ENCODE measurements at regions of chr6 and their contacts with region 1.

Region 1: DNA sequence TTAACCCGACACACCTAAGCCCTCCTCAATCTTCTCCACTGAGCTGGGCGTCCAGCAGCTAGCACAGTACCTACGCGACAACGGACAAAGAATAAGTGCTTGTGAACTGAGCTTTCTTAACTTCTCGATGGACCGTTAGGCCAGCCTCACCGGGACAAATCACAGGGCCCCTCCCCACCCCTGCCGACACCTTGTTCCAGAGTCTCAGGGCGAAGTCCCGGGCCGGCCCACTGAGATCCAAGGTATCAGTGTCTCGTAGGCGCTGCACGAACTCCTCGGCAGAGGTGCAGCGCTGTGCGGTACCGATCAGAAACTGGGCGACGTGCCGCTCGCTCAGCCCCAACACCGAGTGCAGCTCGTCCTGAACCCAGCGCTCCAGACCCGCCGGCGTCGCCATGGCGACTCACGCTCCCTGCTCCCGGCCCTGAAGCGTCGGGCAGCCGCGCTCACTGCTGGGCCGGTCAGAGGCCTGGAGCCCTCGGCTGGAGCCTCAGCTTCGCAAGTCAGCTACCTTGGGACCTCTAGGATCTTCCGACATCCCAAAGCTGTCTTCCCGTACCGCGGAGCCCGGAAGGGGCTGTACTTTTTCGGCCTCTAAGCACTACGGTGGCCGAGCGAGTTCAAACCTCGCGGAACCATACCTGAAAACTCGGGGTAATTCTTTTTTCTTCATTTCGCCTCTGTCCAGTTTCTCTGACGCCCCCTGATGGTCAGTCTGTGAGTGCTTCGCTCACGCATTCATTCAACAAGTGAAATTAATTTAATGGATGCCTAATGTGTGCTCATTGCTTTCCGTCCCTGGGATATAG is at the start of gene DHX16:
- DNase-seq: peak; percentile 65 to 85 (median 83)
- ATAC-seq: peak; percentile 93
- H3K4me3 ChIP-seq: peak within 1 kb of the TSS; percentile 74
- H3K4me3 Mint-ChIP-seq: peak within 1 kb of the TSS; percentile 87 to 94 (median 91)
- H3K27ac ChIP-seq: peak within 1 kb of the TSS; percentile 77
- H3K27ac Mint-ChIP-seq: peak within 1 kb of the TSS; percentile 70 to 93 (median 91)
- H3K4me1 ChIP-seq: peaks cover 8 to 15% of the 10 kb centered on the region in 2 donors
- H3K4me1 Mint-ChIP-seq: peaks cover 28 to 46% (median 43%) of the 10 kb centered on the region in 7 donors
- H3K27me3 ChIP-seq: no peaks in the 10 kb centered on the region
- H3K27me3 Mint-ChIP-seq: no peaks in the 10 kb centered on the region
- total RNA-seq, gene DHX16: 25.9 to 51.5 (median 46.7) TPM

Region 2: GRCh38 chr6:30626484-30627366 is 45.9 kb before region 1 on chr6 and contains the start of gene ATAT1:
- CTCF ChIA-PET with region 1: interaction called, 3 read pairs
- POLR2A ChIA-PET with region 1: interaction called, 4 read pairs
- intact Hi-C with region 1: loop called (anchors 1 to 2 kb)
- DNase-seq: peak; percentile 80 to 90 (median 85)
- ATAC-seq: peak; percentile 100
- H3K4me3 ChIP-seq: peak within 1 kb of the TSS; percentile 84
- H3K4me3 Mint-ChIP-seq: peak within 1 kb of the TSS; percentile 88 to 97 (median 92)
- H3K27ac ChIP-seq: peak within 1 kb of the TSS; percentile 92
- H3K27ac Mint-ChIP-seq: peak within 1 kb of the TSS; percentile 89 to 97 (median 96)
- H3K4me1 ChIP-seq: peaks cover 10 to 13% of the 10 kb centered on the region in 2 donors
- H3K4me1 Mint-ChIP-seq: peaks cover 15 to 35% (median 24%) of the 10 kb centered on the region in 7 donors
- H3K27me3 ChIP-seq: no peaks in the 10 kb centered on the region
- H3K27me3 Mint-ChIP-seq: no peaks in the 10 kb centered on the region
- total RNA-seq, gene ATAT1: 7.0 to 12.0 (median 9.5) TPM

Region 3: GRCh38 chr6:30646458-30647241 is 26.0 kb before region 1 on chr6 and contains the start of gene C6orf136:
- CTCF ChIA-PET with region 1: interaction called, 4 read pairs
- POLR2A ChIA-PET with region 1: interaction called, 12 read pairs
- intact Hi-C with region 1: loop called (anchors 1 kb)
- DNase-seq: peak in 8 of 9 donors; percentile 77 to 94 (median 92)
- ATAC-seq: peak; percentile 90
- H3K4me3 ChIP-seq: peak within 1 kb of the TSS; percentile 93
- H3K4me3 Mint-ChIP-seq: peak within 1 kb of the TSS; percentile 82 to 93 (median 88)
- H3K27ac ChIP-seq: peak within 1 kb of the TSS; percentile 91
- H3K27ac Mint-ChIP-seq: peak within 1 kb of the TSS; percentile 79 to 93 (median 91)
- H3K4me1 ChIP-seq: peaks cover 11 to 17% of the 10 kb centered on the region in 2 donors
- H3K4me1 Mint-ChIP-seq: peaks cover 24 to 38% (median 32%) of the 10 kb centered on the region in 7 donors
- H3K27me3 ChIP-seq: no peaks in the 10 kb centered on the region
- H3K27me3 Mint-ChIP-seq: no peaks in the 10 kb centered on the region
- total RNA-seq, gene C6orf136: 23.7 to 38.0 (median 32.1) TPM

Region 4: DNA sequence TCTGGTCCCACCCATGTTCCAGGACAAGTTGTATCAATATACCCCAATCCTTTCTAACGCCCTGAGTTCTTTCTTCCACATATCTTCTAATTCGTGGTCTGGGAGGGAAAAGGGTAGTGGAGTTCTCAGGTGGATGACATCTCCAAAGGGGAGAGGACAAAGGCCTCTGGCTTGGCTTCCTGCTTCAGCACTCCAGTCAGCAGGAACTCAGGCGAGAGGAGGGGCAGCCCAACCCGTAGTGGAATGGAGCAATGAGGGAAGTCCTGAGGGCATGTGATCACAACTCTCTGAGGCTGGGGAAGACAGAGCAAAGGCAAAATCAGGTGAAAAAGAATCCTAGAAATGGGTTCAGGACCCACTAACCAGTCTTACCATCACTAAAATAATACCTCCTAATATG is 27.7 kb after region 1 on chr6:
- CTCF ChIA-PET with region 1: no interaction called
- POLR2A ChIA-PET with region 1: no interaction called
- intact Hi-C with region 1: no loop called
- DNase-seq: no peak
- ATAC-seq: no peak
- H3K4me3 ChIP-seq: no peak overlapping the region
- H3K4me3 Mint-ChIP-seq: no peak overlapping the region
- H3K27ac ChIP-seq: no peak overlapping the region
- H3K27ac Mint-ChIP-seq: no peak overlapping the region
- H3K4me1 ChIP-seq: no peaks in the 10 kb centered on the region
- H3K4me1 Mint-ChIP-seq: peaks cover 0 to 11% (median 0%) of the 10 kb centered on the region in 7 donors
- H3K27me3 ChIP-seq: no peaks in the 10 kb centered on the region
- H3K27me3 Mint-ChIP-seq: no peaks in the 10 kb centered on the region

Measured in naive thymus-derived CD4-positive, alpha-beta T cell (primary cell).